HEK293T (cell line): ENCODE measurements at regions of chr13 and their contacts with region 1.

Region 1: GRCh38 chr13:94620286-94620896 is 18.7 kb downstream of the GPR180 start:
- DNase-seq: peak; percentile 75

Region 2: GRCh38 chr13:94416454-94417080 is 203.8 kb before region 1 on chr13:
- CTCF ChIA-PET with region 1: interaction called, 10 read pairs
- POLR2A ChIA-PET with region 1: no interaction called
- DNase-seq: peak; percentile 84

Region 3: GRCh38 chr13:94435604-94436226 is 184.7 kb before region 1 on chr13:
- CTCF ChIA-PET with region 1: interaction called, 175 read pairs
- POLR2A ChIA-PET with region 1: interaction called, 3 read pairs
- DNase-seq: peak; percentile 80

Region 4: GRCh38 chr13:94601446-94602431 is 18.7 kb before region 1 on chr13 and contains the start of gene GPR180:
- CTCF ChIA-PET with region 1: interaction called, 14 read pairs
- POLR2A ChIA-PET with region 1: interaction called, 5 read pairs
- DNase-seq: peak; percentile 100

Region 5: DNA sequence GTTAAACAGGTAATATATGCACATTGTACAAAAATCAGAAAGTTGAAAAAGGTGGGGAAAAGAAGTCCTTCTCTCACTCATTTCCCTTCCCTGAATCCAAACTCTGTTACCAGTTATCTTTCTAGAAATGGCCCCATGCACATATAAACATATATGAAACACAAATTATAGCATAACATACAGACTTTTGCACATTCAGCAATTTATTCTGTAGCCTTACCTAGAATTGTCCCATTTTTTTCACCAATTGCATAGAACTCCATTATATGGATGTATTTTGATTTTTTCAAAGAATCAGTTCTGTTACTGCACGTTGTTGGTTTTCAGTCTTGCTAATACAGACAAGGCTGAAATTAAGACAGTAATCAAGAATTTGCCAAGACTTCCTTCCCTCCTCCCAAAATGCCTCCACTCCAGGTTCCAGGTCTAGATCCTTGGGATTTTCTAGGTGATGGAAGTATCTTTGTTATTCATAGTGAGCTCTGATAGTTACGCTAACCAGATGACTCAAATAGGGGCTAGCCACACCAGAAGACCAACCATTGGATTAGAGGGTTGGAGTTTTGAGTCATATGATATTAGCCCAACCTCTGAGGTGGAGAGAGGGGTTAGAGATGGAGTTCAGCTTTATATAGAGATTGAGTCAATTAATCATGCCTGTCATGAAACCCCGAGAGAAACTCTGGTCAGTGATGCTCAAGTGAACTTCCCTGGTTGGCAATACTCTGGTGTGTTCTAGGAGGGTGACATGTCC is 12.0 kb after region 1 on chr13:
- CTCF ChIA-PET with region 1: interaction called, 11 read pairs
- POLR2A ChIA-PET with region 1: interaction called, 3 read pairs
- DNase-seq: no peak

Region 6: GRCh38 chr13:94660695-94661326 is 40.4 kb after region 1 on chr13:
- CTCF ChIA-PET with region 1: interaction called, 17 read pairs
- POLR2A ChIA-PET with region 1: no interaction called
- DNase-seq: no peak

Region 7: GRCh38 chr13:95033890-95034289 is 413.5 kb after region 1 on chr13:
- CTCF ChIA-PET with region 1: no interaction called
- POLR2A ChIA-PET with region 1: no interaction called
- DNase-seq: no peak